GM12878 (cell line): ENCODE measurements at regions of chr12 and their contacts with region 1.

Region 1: DNA sequence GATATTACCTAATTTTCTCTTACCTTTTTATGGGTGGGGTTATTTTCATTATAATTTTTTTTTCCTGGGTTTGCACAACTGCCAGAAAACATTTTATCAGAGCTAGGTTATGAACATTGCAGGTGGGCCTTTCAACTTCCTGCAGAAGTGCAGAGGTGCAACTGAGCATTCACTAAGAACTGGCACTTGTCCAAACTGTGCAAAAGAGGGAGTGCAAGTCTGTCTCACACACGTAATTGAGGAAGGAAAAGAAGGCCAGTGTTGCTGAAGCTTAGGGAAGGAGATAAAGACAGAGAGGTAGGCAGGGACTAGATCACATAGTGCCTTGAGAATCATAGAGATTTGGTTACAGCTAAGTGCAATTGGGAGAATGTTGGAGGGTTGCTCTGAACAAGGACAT is 14.1 kb upstream of the AMN1 start:
- DNase-seq: no peak
- ATAC-seq: no peak; the same call in 2 of the 3 replicates
- H3K4me3 ChIP-seq: no peak overlapping the region
- H3K27ac ChIP-seq: no peak overlapping the region
- H3K4me1 ChIP-seq: peaks cover 27% of the 10 kb centered on the region
- H3K27me3 ChIP-seq: no peaks in the 10 kb centered on the region
- CTCF ChIP-seq: no peak
- EP300 ChIP-seq: no peak
- POLR2A ChIP-seq: no peak
- RAD21 ChIP-seq: no peak

Region 2: GRCh38 chr12:31715283-31715825 is 27.5 kb before region 1 on chr12:
- CTCF ChIA-PET with region 1: no interaction called
- POLR2A ChIA-PET with region 1: interaction called, 12 read pairs
- RAD21 ChIA-PET with region 1: interaction called, 30 read pairs
- SMC1A ChIA-PET with region 1: interaction called, 23 read pairs
- in situ Hi-C with region 1: no loop called
- intact Hi-C with region 1: no loop called
- DNase-seq: peak; percentile 77
- ATAC-seq: peak; percentile 95
- H3K4me3 ChIP-seq: peak overlapping the region; percentile 54; the same call in 1 of the 2 replicates
- H3K27ac ChIP-seq: peak overlapping the region; percentile 90
- H3K4me1 ChIP-seq: peaks cover 10% of the 10 kb centered on the region
- H3K27me3 ChIP-seq: no peaks in the 10 kb centered on the region
- CTCF ChIP-seq: no peak
- EP300 ChIP-seq: peak in 1 of 2 experiments; percentile 35; a peak in 1 of 4 replicates
- POLR2A ChIP-seq: no peak
- RAD21 ChIP-seq: peak; percentile 13